ENCODE measurements at regions of chr3 and their contacts with region 1.

Region 1: DNA sequence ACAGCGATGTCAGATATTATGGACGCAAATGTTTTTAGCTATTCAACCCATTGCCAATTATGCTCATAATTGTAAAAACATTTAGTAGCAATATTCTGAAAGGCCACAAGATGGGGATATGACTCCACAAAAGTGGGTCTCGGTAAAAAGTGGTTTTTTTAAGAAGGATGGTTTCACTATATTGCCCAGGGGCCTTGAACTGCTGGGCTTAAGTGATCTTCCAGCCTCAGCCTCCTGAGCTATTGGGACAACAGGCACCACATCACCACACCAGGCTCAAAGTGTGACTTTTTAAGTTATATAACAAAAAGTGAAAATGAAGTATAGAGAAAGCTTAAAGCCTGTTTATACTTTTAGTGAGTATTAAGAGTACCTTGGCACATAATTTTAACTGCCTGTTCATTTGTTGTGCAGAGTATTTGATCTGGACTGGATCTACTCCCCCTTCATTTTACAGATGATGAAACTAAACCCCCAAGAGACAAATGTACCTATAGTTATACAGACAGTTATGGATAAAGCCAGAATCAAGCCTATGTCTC is 9.4 kb downstream of the NAA50 start:
- DNase-seq: peak; percentile 15 to 38
- H3K4me3 ChIP-seq: no peak overlapping the region
- H3K27ac ChIP-seq: peak overlapping the region; percentile 20; the same call in 1 of the 2 replicates
- H3K4me1 ChIP-seq: peaks cover 19% of the 10 kb centered on the region; the same call in 1 of the 2 replicates
- H3K27me3 ChIP-seq: no peaks in the 10 kb centered on the region
- CTCF ChIP-seq: peak; percentile 79

Region 2: GRCh38 chr3:113912552-113913236 is 176.1 kb after region 1 on chr3:
- CTCF ChIA-PET with region 1: interaction called, 9 read pairs
- POLR2A ChIA-PET with region 1: no interaction called
- intact Hi-C with region 1: loop called (anchors 2 kb)
- DNase-seq: peak; percentile 48 to 77
- H3K4me3 ChIP-seq: no peak overlapping the region
- H3K27ac ChIP-seq: no peak overlapping the region
- H3K4me1 ChIP-seq: peaks cover 4% of the 10 kb centered on the region; the same call in 1 of the 2 replicates
- H3K27me3 ChIP-seq: no peaks in the 10 kb centered on the region
- CTCF ChIP-seq: peak; percentile 84

Region 3: GRCh38 chr3:114152519-114153151 is 416.0 kb after region 1 on chr3:
- CTCF ChIA-PET with region 1: no interaction called
- POLR2A ChIA-PET with region 1: no interaction called
- intact Hi-C with region 1: loop called (anchors 5 kb)
- DNase-seq: peak; percentile 60 to 85
- H3K4me3 ChIP-seq: peak overlapping the region; percentile 61
- H3K27ac ChIP-seq: no peak overlapping the region
- H3K4me1 ChIP-seq: peaks cover 9% of the 10 kb centered on the region; the same call in 1 of the 2 replicates
- H3K27me3 ChIP-seq: no peaks in the 10 kb centered on the region
- CTCF ChIP-seq: peak; percentile 91

Measured in PC-9 (cell line).